Naive thymus-derived CD4-positive, alpha-beta T cell (primary cell): ENCODE measurements at regions of chr3 and their contacts with region 1.

Region 1: DNA sequence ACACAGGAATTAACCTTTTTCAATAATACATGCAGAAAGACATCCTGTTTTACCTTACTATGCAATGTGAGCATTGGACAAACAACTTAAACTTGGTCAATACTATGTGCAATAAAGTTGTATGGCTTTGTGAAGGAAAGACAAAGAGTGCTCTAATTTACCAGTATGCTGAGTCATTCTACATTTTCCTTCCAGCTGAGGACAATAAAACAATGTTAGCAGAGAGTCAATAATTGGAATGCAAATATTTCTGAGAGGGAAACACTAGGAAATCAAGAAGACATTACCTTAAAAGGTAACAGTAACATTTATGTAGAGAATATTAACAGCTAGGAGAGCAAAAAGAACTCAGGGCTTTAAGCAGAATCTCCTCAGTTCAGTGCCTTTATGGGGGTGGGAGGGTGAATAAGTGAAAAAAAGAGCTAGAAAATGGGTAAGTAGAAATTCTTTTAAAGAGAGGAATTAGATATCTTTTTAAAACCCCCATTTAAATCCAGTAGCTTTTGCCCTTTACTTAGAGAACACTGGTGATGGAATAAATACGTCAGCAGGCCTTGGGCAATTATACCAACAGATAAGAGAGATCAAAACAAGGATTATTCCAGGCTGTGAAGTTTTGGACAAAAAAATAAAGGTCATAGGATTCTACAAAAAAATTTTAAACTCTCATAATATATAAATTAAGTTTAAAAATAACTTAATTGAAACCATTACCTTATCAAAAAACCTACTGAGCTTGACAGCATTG is 11.6 kb upstream of the HGD start:
- DNase-seq: no peak
- ATAC-seq: no peak
- H3K4me3 ChIP-seq: no peak overlapping the region
- H3K4me3 Mint-ChIP-seq: no peak overlapping the region
- H3K27ac ChIP-seq: no peak overlapping the region
- H3K27ac Mint-ChIP-seq: peak overlapping the region in 2 of 9 donors; percentile 29 to 30
- H3K4me1 ChIP-seq: no peaks in the 10 kb centered on the region
- H3K4me1 Mint-ChIP-seq: peaks cover 0 to 10% (median 0%) of the 10 kb centered on the region in 7 donors
- H3K27me3 ChIP-seq: no peaks in the 10 kb centered on the region
- H3K27me3 Mint-ChIP-seq: no peaks in the 10 kb centered on the region

Region 2: GRCh38 chr3:120708408-120708807 is 14.8 kb after region 1 on chr3:
- CTCF ChIA-PET with region 1: no interaction called
- POLR2A ChIA-PET with region 1: no interaction called
- intact Hi-C with region 1: loop called in 1 of 2 experiments (anchors 2 kb)
- DNase-seq: no peak
- ATAC-seq: no peak
- H3K4me3 ChIP-seq: no peak overlapping the region
- H3K4me3 Mint-ChIP-seq: no peak overlapping the region
- H3K27ac ChIP-seq: no peak overlapping the region
- H3K27ac Mint-ChIP-seq: peak overlapping the region in 2 of 9 donors; percentile 13 to 62
- H3K4me1 ChIP-seq: no peaks in the 10 kb centered on the region
- H3K4me1 Mint-ChIP-seq: peaks cover 0 to 21% (median 10%) of the 10 kb centered on the region in 7 donors
- H3K27me3 ChIP-seq: no peaks in the 10 kb centered on the region
- H3K27me3 Mint-ChIP-seq: no peaks in the 10 kb centered on the region